ENCODE measurements at regions of chr4 and their contacts with region 1.

Region 1: DNA sequence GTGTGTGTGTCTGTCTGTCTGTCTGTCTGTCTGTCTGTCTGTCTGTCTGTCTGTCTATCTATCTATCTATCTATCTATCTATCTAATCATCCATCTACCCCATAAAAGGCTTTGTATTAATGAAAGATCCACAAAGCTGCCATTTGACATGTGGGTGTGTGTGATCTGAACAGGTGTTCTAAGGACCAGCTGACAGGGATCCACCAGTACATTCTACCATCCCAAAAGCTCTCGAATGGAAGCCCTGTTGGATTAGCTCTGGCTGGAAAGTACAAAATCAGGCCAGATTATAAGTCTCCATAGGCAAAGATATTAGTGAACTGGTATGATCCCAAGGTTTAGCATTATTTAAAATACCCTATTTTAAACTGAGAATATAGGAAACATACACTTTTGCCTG is 299.3 kb downstream of the CAMK2D start:
- DNase-seq: no peak
- ATAC-seq: no peak
- H3K4me3 Mint-ChIP-seq: no peak overlapping the region
- H3K27ac Mint-ChIP-seq: no peak overlapping the region
- H3K4me1 Mint-ChIP-seq: no peaks in the 10 kb centered on the region
- H3K27me3 Mint-ChIP-seq: no peaks in the 10 kb centered on the region
- CTCF ChIP-seq: no peak

Region 2: GRCh38 chr4:113153529-113154101 is 308.7 kb before region 1 on chr4:
- CTCF ChIA-PET with region 1: no interaction called
- POLR2A ChIA-PET with region 1: no interaction called
- intact Hi-C with region 1: no loop called
- DNase-seq: no peak
- ATAC-seq: no peak
- H3K4me3 Mint-ChIP-seq: no peak overlapping the region
- H3K27ac Mint-ChIP-seq: no peak overlapping the region
- H3K4me1 Mint-ChIP-seq: no peaks in the 10 kb centered on the region
- H3K27me3 Mint-ChIP-seq: no peaks in the 10 kb centered on the region
- CTCF ChIP-seq: no peak

Region 3: DNA sequence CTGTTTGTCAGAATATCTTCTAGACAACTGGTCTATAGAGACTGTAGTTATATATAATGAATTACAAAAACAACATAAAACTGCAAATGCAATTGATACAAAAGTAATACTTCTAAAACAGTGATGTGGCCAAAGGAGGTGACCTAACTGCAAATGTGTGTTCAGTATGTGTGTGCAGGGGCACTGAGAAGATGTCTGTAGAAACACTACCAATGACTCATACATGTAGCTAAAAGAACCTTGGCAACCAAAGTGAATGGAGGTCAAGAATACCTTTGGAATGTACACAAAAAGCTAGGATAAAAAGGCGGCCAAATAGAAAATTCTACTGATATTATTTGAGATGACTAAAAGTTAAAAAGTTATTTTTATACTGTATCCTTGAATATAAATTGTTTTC is 37.4 kb after region 1 on chr4:
- CTCF ChIA-PET with region 1: no interaction called
- POLR2A ChIA-PET with region 1: no interaction called
- intact Hi-C with region 1: loop called (anchors 5 kb)
- DNase-seq: no peak
- ATAC-seq: no peak
- H3K4me3 Mint-ChIP-seq: no peak overlapping the region
- H3K27ac Mint-ChIP-seq: no peak overlapping the region
- H3K4me1 Mint-ChIP-seq: no peaks in the 10 kb centered on the region
- H3K27me3 Mint-ChIP-seq: no peaks in the 10 kb centered on the region
- CTCF ChIP-seq: no peak

Measured in activated B cell treated with CpG ODN at 0.5 μM for 24 hours (primary cell).